ENCODE measurements at regions of chr4 and their contacts with region 1.

Region 1: DNA sequence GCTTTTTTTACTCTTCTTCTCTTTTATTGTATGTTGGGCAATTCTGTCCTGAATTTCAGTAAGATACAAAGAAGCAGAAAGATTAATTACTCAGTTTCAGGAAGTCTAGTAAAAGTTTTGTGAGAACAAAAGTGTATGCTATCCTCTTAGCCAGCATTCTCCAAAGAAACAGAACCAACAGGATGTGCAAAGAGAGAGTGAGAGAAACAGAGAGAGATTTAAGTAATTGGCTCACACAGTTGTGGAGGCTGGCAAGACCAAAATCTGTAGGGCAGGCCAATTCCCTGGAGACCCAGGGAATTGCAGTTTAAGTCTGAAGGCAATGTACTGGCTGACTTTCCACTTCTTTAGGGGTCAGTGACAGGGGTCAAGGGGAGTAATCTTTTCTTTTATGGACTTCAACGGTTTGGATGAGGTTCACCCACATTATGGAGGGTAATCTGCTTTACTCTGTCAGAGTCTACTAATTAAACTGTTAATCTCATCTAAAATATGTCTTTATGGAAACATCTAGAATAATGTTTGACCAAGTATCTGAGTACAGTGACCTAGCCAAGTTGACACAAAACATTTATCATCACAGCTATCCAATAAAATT is 59.2 kb upstream of the SLC39A8 start:
- DNase-seq: no peak
- H3K4me3 Mint-ChIP-seq: no peak overlapping the region
- H3K27ac Mint-ChIP-seq: peak overlapping the region; percentile 41
- H3K4me1 Mint-ChIP-seq: peaks cover 7% of the 10 kb centered on the region
- H3K27me3 Mint-ChIP-seq: no peaks in the 10 kb centered on the region
- CTCF ChIP-seq: no peak

Region 2: DNA sequence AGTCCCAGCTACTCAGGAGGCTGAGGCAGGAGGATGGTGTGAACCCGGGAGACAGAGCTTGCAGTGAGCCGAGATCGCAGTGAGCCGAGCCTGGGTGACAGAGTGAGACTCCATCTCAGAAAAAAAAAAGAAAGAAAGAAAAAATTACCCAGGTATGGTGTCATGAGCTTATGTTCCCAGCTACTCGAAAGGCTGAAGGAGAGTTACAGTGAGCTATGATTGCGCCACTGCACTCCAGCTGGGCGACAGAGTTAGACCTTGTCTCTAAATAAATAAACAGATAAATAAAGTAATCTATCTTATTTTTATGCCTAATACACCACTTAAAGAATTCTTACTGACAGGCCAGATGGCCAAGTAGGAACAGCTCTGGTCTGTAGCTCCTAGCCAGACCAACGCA is 132.2 kb before region 1 on chr4:
- CTCF ChIA-PET with region 1: no interaction called
- POLR2A ChIA-PET with region 1: no interaction called
- intact Hi-C with region 1: no loop called
- DNase-seq: no peak
- H3K4me3 Mint-ChIP-seq: no peak overlapping the region
- H3K27ac Mint-ChIP-seq: no peak overlapping the region
- H3K4me1 Mint-ChIP-seq: no peaks in the 10 kb centered on the region
- H3K27me3 Mint-ChIP-seq: no peaks in the 10 kb centered on the region
- CTCF ChIP-seq: no peak

Region 3: GRCh38 chr4:102385672-102386071 is 18.9 kb before region 1 on chr4:
- CTCF ChIA-PET with region 1: no interaction called
- POLR2A ChIA-PET with region 1: no interaction called
- intact Hi-C with region 1: no loop called
- DNase-seq: no peak
- H3K4me3 Mint-ChIP-seq: no peak overlapping the region
- H3K27ac Mint-ChIP-seq: no peak overlapping the region
- H3K4me1 Mint-ChIP-seq: peaks cover 19% of the 10 kb centered on the region
- H3K27me3 Mint-ChIP-seq: no peaks in the 10 kb centered on the region
- CTCF ChIP-seq: no peak

Region 4: GRCh38 chr4:102420569-102421221 is 16.2 kb after region 1 on chr4:
- CTCF ChIA-PET with region 1: interaction called, 10 read pairs
- POLR2A ChIA-PET with region 1: interaction called, 4 read pairs
- intact Hi-C with region 1: no loop called
- DNase-seq: peak; percentile 40
- H3K4me3 Mint-ChIP-seq: no peak overlapping the region
- H3K27ac Mint-ChIP-seq: peak overlapping the region; percentile 53
- H3K4me1 Mint-ChIP-seq: peaks cover 11% of the 10 kb centered on the region
- H3K27me3 Mint-ChIP-seq: no peaks in the 10 kb centered on the region
- CTCF ChIP-seq: peak; percentile 23

Region 5: GRCh38 chr4:102760645-102761295 is 356.2 kb after region 1 on chr4 and contains the start of gene MANBA:
- CTCF ChIA-PET with region 1: no interaction called
- POLR2A ChIA-PET with region 1: no interaction called
- intact Hi-C with region 1: no loop called
- DNase-seq: peak; percentile 84
- H3K4me3 Mint-ChIP-seq: peak within 1 kb of the TSS; percentile 90
- H3K27ac Mint-ChIP-seq: peak within 1 kb of the TSS; percentile 37
- H3K4me1 Mint-ChIP-seq: peaks cover 17% of the 10 kb centered on the region
- H3K27me3 Mint-ChIP-seq: no peaks in the 10 kb centered on the region
- CTCF ChIP-seq: no peak
- total RNA-seq, gene MANBA: 11.2 and 13.2 TPM in 2 replicates